ENCODE measurements at regions of chr2 and their contacts with region 1.

Region 1: DNA sequence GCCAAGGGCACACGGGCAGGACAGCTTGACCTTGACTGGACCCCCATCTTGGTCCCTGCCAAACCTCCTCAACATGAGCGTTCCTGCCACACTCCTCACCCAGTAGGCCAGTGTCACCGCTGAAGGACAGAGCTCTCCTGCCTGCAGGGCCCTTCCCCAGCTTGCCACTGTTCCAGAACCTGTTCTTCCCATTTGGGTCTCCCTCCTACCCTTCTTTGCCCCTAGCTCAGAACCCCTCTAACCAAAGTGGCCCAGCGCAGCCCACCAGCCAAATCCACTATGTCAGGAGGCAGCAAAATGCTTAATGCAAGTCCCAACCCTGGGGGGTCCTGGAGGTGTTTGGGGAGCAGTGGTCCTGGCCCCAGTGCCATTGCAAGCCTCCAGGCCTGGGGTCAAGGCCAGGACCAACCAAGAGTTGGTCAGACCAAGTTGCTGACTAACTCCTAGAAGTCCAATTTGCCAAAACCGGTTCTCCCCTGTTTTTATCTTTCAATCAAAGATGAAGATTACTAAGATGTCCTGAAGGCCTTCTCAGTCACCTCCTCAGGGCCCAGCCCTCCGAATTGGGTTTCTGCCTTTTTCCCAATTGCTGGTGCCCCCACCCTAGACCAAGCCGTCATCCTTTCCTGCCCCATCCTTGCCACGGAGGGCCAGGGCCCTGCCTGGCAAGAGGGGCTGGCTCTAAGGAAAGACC is 4.5 kb upstream of the ASPRV1 start:
- DNase-seq: no peak
- H3K4me3 ChIP-seq: no peak overlapping the region
- H3K27ac ChIP-seq: no peak overlapping the region
- H3K4me1 ChIP-seq: no peaks in the 10 kb centered on the region
- H3K27me3 ChIP-seq: peaks cover 0 to 2% of the 10 kb centered on the region in 2 experiments
- CTCF ChIP-seq: no peak
- POLR2A ChIP-seq: no peak

Region 2: GRCh38 chr2:69955029-69955428 is 10.9 kb before region 1 on chr2:
- CTCF ChIA-PET with region 1: interaction called, 10 read pairs
- POLR2A ChIA-PET with region 1: no interaction called
- dilution Hi-C with region 1: no loop called
- intact Hi-C with region 1: no loop called
- DNase-seq: no peak
- H3K4me3 ChIP-seq: no peak overlapping the region
- H3K27ac ChIP-seq: no peak overlapping the region
- H3K4me1 ChIP-seq: no peaks in the 10 kb centered on the region
- H3K27me3 ChIP-seq: peaks cover 12 to 20% of the 10 kb centered on the region in 2 experiments
- CTCF ChIP-seq: no peak
- POLR2A ChIP-seq: no peak